ENCODE measurements at regions of chr19 and their contacts with region 1.

Region 1: GRCh38 chr19:48872182-48872883 is at the start of gene PPP1R15A:
- DNase-seq: peak; percentile 97 to 99 (median 98)
- ATAC-seq: peak; percentile 80 to 85 (median 82)
- H3K4me3 ChIP-seq: peak within 1 kb of the TSS; percentile 76 to 87 (median 83)
- H3K27ac ChIP-seq: peak within 1 kb of the TSS; percentile 94 to 100 (median 98)
- H3K4me1 ChIP-seq: peaks cover 0 to 25% (median 5%) of the 10 kb centered on the region in 3 donors
- H3K27me3 ChIP-seq: no peaks in the 10 kb centered on the region
- CTCF ChIP-seq: no peak
- total RNA-seq, gene PPP1R15A: 8.1 to 20.6 (median 12.4) TPM

Region 2: DNA sequence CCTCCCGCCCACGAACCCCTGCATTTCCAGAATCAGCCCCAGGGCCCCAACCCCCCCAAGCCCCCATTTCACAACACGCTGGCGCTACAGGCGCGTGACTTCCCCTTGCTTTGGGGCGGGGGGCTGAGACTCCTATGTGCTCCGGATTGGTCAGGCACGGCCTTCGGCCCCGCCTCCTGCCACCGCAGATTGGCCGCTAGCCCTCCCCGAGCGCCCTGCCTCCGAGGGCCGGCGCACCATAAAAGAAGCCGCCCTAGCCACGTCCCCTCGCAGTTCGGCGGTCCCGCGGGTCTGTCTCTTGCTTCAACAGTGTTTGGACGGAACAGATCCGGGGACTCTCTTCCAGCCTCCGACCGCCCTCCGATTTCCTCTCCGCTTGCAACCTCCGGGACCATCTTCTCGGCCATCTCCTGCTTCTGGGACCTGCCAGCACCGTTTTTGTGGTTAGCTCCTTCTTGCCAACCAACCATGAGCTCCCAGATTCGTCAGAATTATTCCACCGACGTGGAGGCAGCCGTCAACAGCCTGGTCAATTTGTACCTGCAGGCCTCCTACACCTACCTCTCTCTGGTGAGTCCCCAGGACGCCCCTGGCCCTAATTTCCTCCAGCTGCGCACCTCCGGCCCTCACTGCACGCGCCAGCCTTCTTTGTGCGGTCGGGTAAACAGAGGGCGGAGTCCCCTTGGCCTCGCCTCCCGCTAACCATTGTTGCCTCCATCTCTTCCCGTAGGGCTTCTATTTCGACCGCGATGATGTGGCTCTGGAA is 92.9 kb after region 1 on chr19 and contains the start of gene FTL:
- intact Hi-C with region 1: loop called in 1 of 3 experiments (anchors 10 kb)
- DNase-seq: peak; percentile 94 to 99 (median 96)
- ATAC-seq: peak; percentile 86 to 89 (median 88)
- H3K4me3 ChIP-seq: peak within 1 kb of the TSS; percentile 42 to 84 (median 64)
- H3K27ac ChIP-seq: peak within 1 kb of the TSS; percentile 77 to 93 (median 88)
- H3K4me1 ChIP-seq: peaks cover 14 to 17% (median 15%) of the 10 kb centered on the region in 3 donors
- H3K27me3 ChIP-seq: no peaks in the 10 kb centered on the region
- CTCF ChIP-seq: no peak
- total RNA-seq, gene FTL: 394 to 1,427 (median 690) TPM